Activated T-helper 1 cell treated with anti-CD3 and anti-CD28 coated beads, Interleukin-12 subunit alpha, Interleukin-12 subunit beta, Interleukin-2, Interleukin-4 antibody, amounts not matched to agents 30 ng/mL and 10 ng/mL and 1 ng/mL, durations not matched to agents 14 hours and 24 hours and 36 hours (primary cell): ENCODE measurements at regions of chr3 and their contacts with region 1.

Region 1: DNA sequence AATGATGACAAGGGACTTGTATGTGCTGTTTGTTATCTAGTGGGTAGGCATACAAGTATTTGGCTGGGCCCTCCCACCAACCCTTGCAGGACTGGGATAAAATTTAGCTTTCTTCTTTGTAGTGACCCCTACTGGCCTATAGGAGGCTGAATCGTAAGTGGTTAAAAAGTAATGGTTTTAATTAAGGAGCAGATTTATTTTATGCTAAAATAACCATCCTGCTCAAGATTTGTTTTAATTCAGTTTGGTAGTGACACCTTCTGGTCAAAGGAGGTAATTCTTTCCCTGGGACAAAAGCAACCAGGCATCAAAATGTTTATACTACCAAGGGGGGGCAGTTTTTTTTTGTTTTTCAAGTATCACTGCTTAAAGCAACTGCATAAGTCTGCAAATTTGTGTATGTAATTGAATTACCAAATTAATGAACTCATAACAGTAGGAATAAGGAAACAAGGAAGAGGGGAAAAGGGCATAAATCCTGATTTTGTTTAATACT is 70.7 kb downstream of the TOP2B start:
- DNase-seq: no peak
- H3K4me3 Mint-ChIP-seq: no peak overlapping the region
- H3K27ac Mint-ChIP-seq: no peak overlapping the region
- H3K4me1 Mint-ChIP-seq: no peaks in the 10 kb centered on the region
- H3K27me3 Mint-ChIP-seq: no peaks in the 10 kb centered on the region

Region 2: GRCh38 chr3:24773798-24774197 is 820.3 kb before region 1 on chr3:
- intact Hi-C with region 1: loop called (anchors 2 kb)
- DNase-seq: no peak
- H3K4me3 Mint-ChIP-seq: no peak overlapping the region
- H3K27ac Mint-ChIP-seq: no peak overlapping the region
- H3K4me1 Mint-ChIP-seq: no peaks in the 10 kb centered on the region
- H3K27me3 Mint-ChIP-seq: no peaks in the 10 kb centered on the region

Region 3: GRCh38 chr3:25448750-25449692 is 145.0 kb before region 1 on chr3:
- intact Hi-C with region 1: loop called (anchors 10 kb)
- DNase-seq: no peak
- H3K4me3 Mint-ChIP-seq: no peak overlapping the region
- H3K27ac Mint-ChIP-seq: no peak overlapping the region
- H3K4me1 Mint-ChIP-seq: no peaks in the 10 kb centered on the region
- H3K27me3 Mint-ChIP-seq: peaks cover 2% of the 10 kb centered on the region

Region 4: DNA sequence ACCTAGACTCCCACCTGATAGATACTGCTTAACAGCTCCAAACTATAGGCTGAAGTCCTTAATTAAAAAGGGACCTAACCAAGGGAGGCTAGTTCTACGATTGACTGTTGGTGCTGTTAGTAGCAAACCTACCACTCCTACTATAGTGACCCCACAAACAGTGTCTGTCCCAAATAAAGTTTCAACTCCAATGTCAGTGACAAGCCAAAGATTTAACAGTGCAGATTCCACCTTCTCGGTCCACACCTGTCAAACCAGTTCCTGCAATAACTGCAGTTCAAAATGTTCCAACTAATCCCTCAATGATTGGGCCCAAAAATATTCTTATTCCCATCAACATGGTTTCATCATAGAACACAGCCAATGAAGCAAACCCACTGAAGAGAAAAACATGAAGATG is 161.2 kb after region 1 on chr3:
- intact Hi-C with region 1: no loop called
- DNase-seq: no peak
- H3K4me3 Mint-ChIP-seq: no peak overlapping the region
- H3K27ac Mint-ChIP-seq: no peak overlapping the region
- H3K4me1 Mint-ChIP-seq: peaks cover 5% of the 10 kb centered on the region
- H3K27me3 Mint-ChIP-seq: no peaks in the 10 kb centered on the region